ENCODE measurements at regions of chr1 and their contacts with region 1.

Region 1: GRCh38 chr1:154809436-154810413 is 60.4 kb downstream of the KCNN3 start:
- DNase-seq: peak; percentile 41 to 67
- ATAC-seq: peak; percentile 40 to 71 (median 61)
- H3K4me3 ChIP-seq: peak overlapping the region; percentile 51
- H3K27ac ChIP-seq: peak overlapping the region; percentile 91
- H3K4me1 ChIP-seq: peaks cover 75% of the 10 kb centered on the region
- H3K27me3 ChIP-seq: no peaks in the 10 kb centered on the region
- CTCF ChIP-seq: no peak

Region 2: GRCh38 chr1:154639876-154640275 is 169.8 kb before region 1 on chr1:
- intact Hi-C with region 1: no loop called
- DNase-seq: no peak
- ATAC-seq: no peak
- H3K4me3 ChIP-seq: no peak overlapping the region
- H3K27ac ChIP-seq: no peak overlapping the region
- H3K4me1 ChIP-seq: no peaks in the 10 kb centered on the region
- H3K27me3 ChIP-seq: peaks cover 0 to 12% (median 5%) of the 10 kb centered on the region in 3 donors
- CTCF ChIP-seq: no peak

Region 3: GRCh38 chr1:154831462-154831861 is 21.7 kb after region 1 on chr1:
- intact Hi-C with region 1: no loop called
- DNase-seq: no peak
- ATAC-seq: no peak
- H3K4me3 ChIP-seq: no peak overlapping the region
- H3K27ac ChIP-seq: no peak overlapping the region
- H3K4me1 ChIP-seq: peaks cover 40% of the 10 kb centered on the region
- H3K27me3 ChIP-seq: no peaks in the 10 kb centered on the region
- CTCF ChIP-seq: no peak

Region 4: GRCh38 chr1:154860156-154860870 is 50.6 kb after region 1 on chr1:
- intact Hi-C with region 1: loop called (anchors 2 to 5 kb)
- DNase-seq: peak; percentile 69 to 84
- ATAC-seq: peak; percentile 71 to 79 (median 73)
- H3K4me3 ChIP-seq: peak overlapping the region; percentile 29
- H3K27ac ChIP-seq: peak overlapping the region; percentile 96
- H3K4me1 ChIP-seq: peaks cover 88% of the 10 kb centered on the region
- H3K27me3 ChIP-seq: no peaks in the 10 kb centered on the region
- CTCF ChIP-seq: no peak

Region 5: DNA sequence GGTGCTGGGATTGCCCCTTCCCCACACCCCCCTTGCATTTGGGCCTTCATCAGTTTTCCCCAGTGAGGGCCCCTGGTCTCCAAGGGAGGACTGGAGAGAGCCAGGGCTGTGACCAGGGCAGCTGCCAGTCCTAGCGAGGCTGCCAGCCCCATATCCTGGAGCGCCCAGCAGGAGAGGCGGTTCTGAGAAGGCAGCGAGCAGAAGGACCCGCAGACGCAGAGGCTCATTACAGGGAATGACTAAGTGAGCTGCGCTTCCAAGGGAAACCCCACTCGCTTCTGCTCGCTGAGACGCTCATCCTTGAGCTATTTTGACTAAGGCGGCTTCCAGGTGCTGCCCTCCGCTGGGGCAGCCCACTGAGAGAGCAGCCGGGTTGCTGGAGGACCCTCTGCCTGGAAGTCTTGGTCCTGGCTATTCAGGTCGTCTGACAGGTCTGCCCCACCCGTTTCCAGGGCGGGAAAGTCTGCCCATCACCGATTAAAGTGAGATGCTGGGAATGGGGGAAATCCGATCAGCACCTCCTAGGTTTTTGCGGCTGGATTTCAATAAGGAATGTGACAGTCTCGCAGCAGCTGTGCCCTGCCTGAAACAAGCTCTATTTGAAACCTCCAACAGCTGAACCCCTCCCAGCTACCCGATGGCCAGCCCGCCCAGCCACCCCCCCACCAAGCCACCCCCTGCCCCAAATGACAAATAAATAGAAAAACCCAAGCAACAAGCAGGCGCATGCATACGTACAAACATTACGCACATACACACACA is 57.5 kb after region 1 on chr1:
- intact Hi-C with region 1: loop called in 1 of 2 experiments (anchors 5 kb)
- DNase-seq: peak; percentile 67 to 87
- ATAC-seq: peak; percentile 54 to 69 (median 68)
- H3K4me3 ChIP-seq: peak overlapping the region; percentile 91
- H3K27ac ChIP-seq: peak overlapping the region; percentile 96
- H3K4me1 ChIP-seq: peaks cover 44% of the 10 kb centered on the region
- H3K27me3 ChIP-seq: no peaks in the 10 kb centered on the region
- CTCF ChIP-seq: no peak

Measured in psoas muscle (tissue), 8 donors.